GM12878 (cell line): ENCODE measurements at regions of chr19 and their contacts with region 1.

Region 1: GRCh38 chr19:45862564-45863334 is at the start of gene SYMPK:
- DNase-seq: peak; percentile 94
- ATAC-seq: peak; percentile 94
- H3K4me3 ChIP-seq: peak within 1 kb of the TSS; percentile 97
- H3K27ac ChIP-seq: peak within 1 kb of the TSS; percentile 93
- H3K4me1 ChIP-seq: peaks cover 5% of the 10 kb centered on the region
- H3K27me3 ChIP-seq: peaks cover 0 to 6% of the 10 kb centered on the region in 2 experiments; a peak in 2 of 4 replicates
- CTCF ChIP-seq: no peak
- EP300 ChIP-seq: 0 out of 4 replicates have a peak, but pooled peaks of 1 of the 2 experiments have one; percentile 10
- POLR2A ChIP-seq: peak; percentile 92
- RAD21 ChIP-seq: no peak
- polyA plus RNA-seq, gene SYMPK: 0.49 to 0.79 TPM

Region 2: GRCh38 chr19:45817010-45817724 is 45.6 kb before region 1 on chr19:
- CTCF ChIA-PET with region 1: interaction called, 17 read pairs
- POLR2A ChIA-PET with region 1: interaction called, 3 read pairs
- RAD21 ChIA-PET with region 1: interaction called, 14 read pairs
- SMC1A ChIA-PET with region 1: interaction called, 6 read pairs
- in situ Hi-C with region 1: no loop called
- intact Hi-C with region 1: no loop called
- DNase-seq: peak; percentile 75
- ATAC-seq: peak; percentile 99
- H3K4me3 ChIP-seq: no peak overlapping the region
- H3K27ac ChIP-seq: no peak overlapping the region
- H3K4me1 ChIP-seq: no peaks in the 10 kb centered on the region
- H3K27me3 ChIP-seq: no peaks in the 10 kb centered on the region
- CTCF ChIP-seq: peak; percentile 96 to 100 (median 98)
- EP300 ChIP-seq: no peak
- POLR2A ChIP-seq: no peak
- RAD21 ChIP-seq: peak; percentile 70